BJ (cell line): ENCODE measurements at regions of chr1 and their contacts with region 1.

Region 1: DNA sequence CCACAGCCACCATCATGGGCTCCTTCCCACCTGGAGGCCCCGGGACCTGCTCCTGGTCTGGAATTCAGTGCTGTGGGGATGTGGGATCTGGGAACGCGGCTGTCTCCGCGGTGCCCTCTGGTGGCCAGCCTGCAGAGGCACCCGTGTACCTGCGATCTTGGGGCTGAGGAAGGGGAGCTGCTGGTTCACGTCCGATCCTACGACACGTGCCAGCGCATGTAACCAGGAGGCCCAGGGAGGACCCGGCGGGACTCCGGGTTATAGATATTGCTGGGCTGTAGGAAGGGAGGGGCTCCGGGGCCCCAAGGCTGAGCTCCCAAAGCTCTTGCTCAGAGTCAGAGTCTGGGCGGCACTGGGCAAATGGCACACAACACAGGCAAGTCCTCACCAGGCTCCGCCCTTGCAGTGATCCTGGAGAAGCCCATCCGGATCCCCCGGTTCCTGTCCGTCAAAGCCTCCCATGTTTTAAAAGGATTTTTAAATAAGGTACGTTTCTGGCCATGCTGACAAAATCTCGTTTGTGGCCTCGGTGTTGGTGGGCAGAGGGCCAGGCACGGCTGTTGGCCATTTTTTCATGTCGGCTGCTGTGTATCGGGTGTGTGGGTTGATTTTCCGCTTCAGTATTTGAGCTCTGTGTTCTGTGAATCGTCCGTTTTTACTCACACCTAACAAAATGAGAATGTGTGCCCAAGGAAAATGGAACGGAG is 20.1 kb downstream of the FAAP20 start:
- DNase-seq: peak; percentile 4
- H3K4me3 ChIP-seq: peak overlapping the region; percentile 34
- H3K27me3 ChIP-seq: no peaks in the 10 kb centered on the region
- CTCF ChIP-seq: peak; percentile 98

Region 2: GRCh38 chr1:2091611-2092604 is 82.6 kb before region 1 on chr1:
- CTCF ChIA-PET with region 1: interaction called, 10 read pairs
- POLR2A ChIA-PET with region 1: no interaction called
- DNase-seq: no peak
- H3K4me3 ChIP-seq: no peak overlapping the region
- H3K27me3 ChIP-seq: no peaks in the 10 kb centered on the region
- CTCF ChIP-seq: peak; percentile 67

Region 3: DNA sequence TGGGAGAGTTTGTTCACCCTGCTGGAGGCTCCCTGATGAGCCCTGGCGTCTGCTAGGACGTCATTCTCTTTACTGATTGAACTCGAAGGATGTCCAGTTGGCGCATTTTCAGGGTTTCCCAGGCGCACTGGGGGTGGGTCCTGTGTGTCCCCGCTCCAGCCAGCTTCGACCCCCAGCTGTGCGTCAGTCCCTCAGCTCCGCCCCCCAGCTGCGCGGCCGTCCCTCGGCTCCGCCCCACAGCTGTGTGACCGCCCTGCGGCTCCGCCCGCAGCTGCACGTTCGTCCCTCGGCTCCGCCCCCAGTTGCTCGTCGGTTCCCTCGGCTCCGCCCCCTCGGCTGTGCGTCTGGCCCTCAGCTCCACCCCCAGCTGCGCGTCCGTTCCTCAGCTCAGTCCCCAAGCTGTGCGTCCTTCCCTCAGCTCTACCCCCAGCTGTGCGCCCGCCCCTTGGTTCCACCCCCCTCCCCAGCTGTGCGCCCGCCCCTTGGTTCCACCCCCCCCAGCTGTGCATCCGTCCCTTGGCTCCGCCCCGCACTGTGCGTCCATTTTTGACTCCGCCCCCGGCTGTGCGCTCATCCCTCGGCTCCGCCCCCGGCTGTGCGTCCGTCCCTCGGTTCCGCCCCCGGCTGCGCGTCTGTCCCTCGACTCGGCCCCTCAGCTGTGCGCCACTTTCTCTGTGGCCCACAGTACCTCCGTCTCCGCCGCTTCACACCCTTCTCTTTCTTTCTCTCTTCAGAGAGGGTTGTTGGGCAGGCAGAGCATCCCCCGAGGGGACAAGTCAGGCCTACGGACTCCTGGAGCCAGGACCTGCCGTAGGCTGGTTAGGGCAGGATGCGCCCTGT is 41.2 kb before region 1 on chr1:
- CTCF ChIA-PET with region 1: interaction called, 38 read pairs
- POLR2A ChIA-PET with region 1: no interaction called
- DNase-seq: peak; percentile 93
- H3K4me3 ChIP-seq: peak overlapping the region; percentile 38
- H3K27me3 ChIP-seq: no peaks in the 10 kb centered on the region
- CTCF ChIP-seq: no peak

Region 4: GRCh38 chr1:2148691-2149090 is 25.8 kb before region 1 on chr1:
- CTCF ChIA-PET with region 1: interaction called, 24 read pairs
- POLR2A ChIA-PET with region 1: no interaction called
- DNase-seq: no peak
- H3K4me3 ChIP-seq: no peak overlapping the region
- H3K27me3 ChIP-seq: no peaks in the 10 kb centered on the region; the same call in 1 of the 2 replicates
- CTCF ChIP-seq: no peak

Region 5: DNA sequence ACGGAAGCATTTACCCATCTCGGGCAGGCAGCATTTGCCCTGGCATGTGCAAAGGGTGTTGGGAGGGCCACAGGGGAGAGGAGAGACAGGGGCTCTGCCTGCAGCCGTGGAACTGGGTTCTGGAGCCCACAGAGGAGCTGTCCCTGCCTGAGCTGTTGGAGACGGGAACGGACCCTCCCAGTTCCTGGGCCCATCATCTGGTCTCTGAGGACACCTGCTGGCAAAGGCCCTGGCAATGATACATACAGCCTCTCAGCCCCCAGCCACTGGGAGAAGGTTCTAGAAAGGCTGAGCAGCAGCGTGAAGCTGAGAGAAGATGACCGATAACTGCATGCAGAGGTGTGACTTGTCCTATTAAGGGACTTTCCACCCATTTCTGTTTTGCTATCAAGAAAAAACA is 11.3 kb before region 1 on chr1:
- CTCF ChIA-PET with region 1: interaction called, 25 read pairs
- POLR2A ChIA-PET with region 1: no interaction called
- DNase-seq: no peak
- H3K4me3 ChIP-seq: no peak overlapping the region
- H3K27me3 ChIP-seq: peaks cover 1% of the 10 kb centered on the region; the same call in 1 of the 2 replicates
- CTCF ChIP-seq: no peak

Region 6: DNA sequence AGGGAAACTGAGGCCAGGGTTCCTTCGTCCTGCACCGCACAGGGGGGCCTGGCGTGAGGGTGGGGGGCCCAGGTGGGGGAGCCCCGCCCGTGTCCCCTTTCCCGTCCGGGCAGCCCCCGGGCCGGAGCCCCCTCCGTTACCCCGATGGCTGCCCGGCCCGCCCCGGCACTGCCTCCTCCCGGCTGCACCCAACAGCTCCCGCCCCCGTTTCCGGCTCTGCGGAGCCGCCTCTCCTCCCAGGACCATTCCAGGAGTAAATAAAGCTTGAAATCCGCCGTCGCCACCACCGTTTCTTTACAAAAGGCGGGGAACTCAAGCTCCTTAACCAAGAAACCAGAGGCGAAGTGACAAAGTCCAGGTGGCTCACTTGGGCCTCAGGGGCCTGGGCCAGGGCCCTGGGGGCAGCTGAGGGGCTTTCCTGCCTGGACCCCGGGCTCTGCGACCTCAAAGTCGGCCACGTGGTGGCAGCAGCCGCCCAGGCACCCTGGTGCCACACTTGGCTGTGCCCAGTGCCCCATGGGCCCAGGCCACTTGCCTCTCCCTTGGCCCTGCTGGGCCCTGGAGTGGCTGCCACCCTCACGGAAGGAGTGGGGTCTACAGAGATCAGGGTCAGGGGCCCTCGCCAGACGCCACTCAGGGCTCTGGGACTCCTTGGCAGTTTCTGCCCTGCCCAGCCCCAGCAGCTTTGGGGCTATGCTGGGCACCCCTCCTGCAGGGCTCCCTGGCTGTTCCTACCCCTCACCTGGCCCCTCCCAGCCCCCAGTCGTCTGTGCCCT is 20.6 kb after region 1 on chr1:
- CTCF ChIA-PET with region 1: interaction called, 50 read pairs
- POLR2A ChIA-PET with region 1: no interaction called
- DNase-seq: peak; percentile 26
- H3K4me3 ChIP-seq: peak overlapping the region; percentile 61
- H3K27me3 ChIP-seq: no peaks in the 10 kb centered on the region
- CTCF ChIP-seq: peak; percentile 90